Right cardiac atrium (tissue), 5 donors: ENCODE measurements at regions of chr6 and their contacts with region 1.

Region 1: GRCh38 chr6:89122625-89123024 is 4.8 kb upstream of the SRSF12 start:
- DNase-seq: no peak
- ATAC-seq: peak; percentile 49 to 57
- H3K4me3 ChIP-seq: no peak overlapping the region
- H3K27ac ChIP-seq: no peak overlapping the region
- H3K4me1 ChIP-seq: no peaks in the 10 kb centered on the region
- H3K27me3 ChIP-seq: no peaks in the 10 kb centered on the region

Region 2: GRCh38 chr6:89237158-89237820 is 114.7 kb after region 1 on chr6:
- intact Hi-C with region 1: loop called in 3 of 4 experiments (anchors 2 to 10 kb)
- DNase-seq: no peak
- ATAC-seq: no peak
- H3K4me3 ChIP-seq: no peak overlapping the region
- H3K27ac ChIP-seq: no peak overlapping the region
- H3K4me1 ChIP-seq: no peaks in the 10 kb centered on the region
- H3K27me3 ChIP-seq: no peaks in the 10 kb centered on the region

Region 3: DNA sequence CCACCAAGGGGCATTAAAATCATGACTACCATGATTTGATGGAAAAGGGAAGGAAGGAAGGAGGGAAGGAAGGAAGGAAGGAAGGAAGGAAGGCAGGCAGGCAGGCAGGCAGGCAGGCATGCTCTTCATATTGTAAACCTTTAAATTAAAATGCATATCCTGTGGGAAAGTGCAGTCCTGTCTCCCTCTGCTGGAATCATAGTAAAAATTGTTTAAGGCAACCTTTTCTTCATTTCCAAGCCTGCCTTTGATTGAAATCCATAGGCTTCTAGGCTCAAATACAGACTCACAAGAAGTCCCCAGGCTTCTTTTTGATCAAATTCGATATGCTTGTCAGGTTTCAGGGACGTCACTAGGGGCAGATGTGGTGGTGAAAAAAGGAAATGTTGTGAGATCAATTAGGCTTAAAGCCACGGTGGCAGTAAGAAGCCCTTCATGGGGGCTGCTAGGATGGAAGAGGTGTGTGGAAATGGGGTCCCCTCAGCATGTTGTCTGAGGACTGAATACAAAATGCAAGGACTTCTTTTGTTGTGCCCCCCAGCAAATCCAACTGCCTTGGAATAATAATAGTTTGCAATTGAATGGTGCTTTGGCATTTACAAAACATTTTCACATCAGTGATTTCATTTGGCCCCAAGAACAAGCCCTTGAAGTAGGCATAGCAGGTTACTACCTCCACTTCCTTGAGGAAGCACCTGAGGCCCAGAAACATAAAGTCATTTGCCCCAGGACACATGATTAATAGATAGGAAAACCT is 120.1 kb after region 1 on chr6:
- intact Hi-C with region 1: loop called in 3 of 4 experiments (anchors 2 to 10 kb)
- DNase-seq: no peak
- ATAC-seq: no peak
- H3K4me3 ChIP-seq: no peak overlapping the region
- H3K27ac ChIP-seq: no peak overlapping the region
- H3K4me1 ChIP-seq: peaks cover 1% of the 10 kb centered on the region
- H3K27me3 ChIP-seq: no peaks in the 10 kb centered on the region